ENCODE measurements at regions of chr1 and their contacts with region 1.

Region 1: GRCh38 chr1:203440771-203441170 is 34.8 kb upstream of the PRELP start:
- DNase-seq: peak in 1 of 2 donors; percentile 92
- H3K4me3 ChIP-seq: no peak overlapping the region
- H3K27ac ChIP-seq: peak overlapping the region; percentile 73 to 79
- H3K4me1 ChIP-seq: peaks cover 0 to 16% of the 10 kb centered on the region in 2 donors
- H3K27me3 ChIP-seq: no peaks in the 10 kb centered on the region
- CTCF ChIP-seq: peak; percentile 79 to 86 (median 82)

Region 2: GRCh38 chr1:203368624-203369451 is 71.9 kb before region 1 on chr1:
- intact Hi-C with region 1: loop called (anchors 1 kb)
- DNase-seq: peak in 1 of 2 donors; percentile 85
- H3K4me3 ChIP-seq: no peak overlapping the region
- H3K27ac ChIP-seq: no peak overlapping the region
- H3K4me1 ChIP-seq: peaks cover 0 to 11% of the 10 kb centered on the region in 2 donors
- H3K27me3 ChIP-seq: no peaks in the 10 kb centered on the region
- CTCF ChIP-seq: peak; percentile 38 to 50 (median 48)

Region 3: DNA sequence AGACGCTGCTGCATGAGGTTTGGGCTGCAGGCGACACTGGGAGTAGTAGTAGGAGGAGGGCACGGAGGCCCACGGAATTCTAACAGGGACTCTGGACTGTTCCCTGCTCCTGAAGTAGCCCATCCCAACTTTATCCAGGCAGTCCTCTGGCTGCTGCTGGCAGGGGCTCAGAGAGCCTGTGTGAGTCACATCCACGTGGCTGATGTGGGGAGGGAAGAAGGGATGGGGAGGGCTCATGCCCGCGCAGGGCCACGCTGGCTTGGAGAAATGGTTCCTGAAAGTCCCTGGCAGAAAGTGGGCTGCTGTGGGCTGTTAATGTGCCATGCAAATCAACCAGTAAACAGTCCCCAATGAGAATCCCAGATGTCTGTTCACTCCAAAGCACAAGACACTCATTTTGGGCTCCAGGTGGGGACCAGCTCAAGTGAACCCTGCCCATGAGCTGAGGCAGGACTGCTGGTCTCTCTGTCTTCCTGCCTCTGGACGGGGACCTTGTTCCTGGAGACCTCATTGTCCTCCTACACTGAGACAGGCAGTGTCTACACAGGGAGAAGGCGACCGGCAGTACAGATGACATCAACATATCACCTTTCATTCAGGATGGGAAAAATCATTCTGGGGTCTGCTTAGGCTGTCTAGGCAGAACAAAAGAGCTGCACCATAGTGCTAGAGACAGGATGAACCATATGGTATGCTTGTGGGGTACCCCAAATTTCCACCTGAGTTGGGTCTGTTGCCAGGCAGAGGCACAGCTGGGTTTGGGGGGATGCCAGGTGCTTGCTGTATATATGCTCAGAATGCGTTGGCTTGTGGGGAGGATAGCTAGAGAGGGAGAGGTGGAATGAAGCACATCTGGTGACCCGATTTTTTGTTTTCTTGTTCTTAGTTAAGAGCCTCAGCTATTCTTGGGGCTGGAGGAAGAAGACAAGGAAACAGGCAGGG is 32.0 kb before region 1 on chr1:
- intact Hi-C with region 1: loop called (anchors 5 kb)
- DNase-seq: peak; percentile 78 to 94
- H3K4me3 ChIP-seq: no peak overlapping the region
- H3K27ac ChIP-seq: peak overlapping the region; percentile 92 to 97
- H3K4me1 ChIP-seq: peaks cover 37 to 56% of the 10 kb centered on the region in 2 donors
- H3K27me3 ChIP-seq: no peaks in the 10 kb centered on the region
- CTCF ChIP-seq: no peak

Region 4: DNA sequence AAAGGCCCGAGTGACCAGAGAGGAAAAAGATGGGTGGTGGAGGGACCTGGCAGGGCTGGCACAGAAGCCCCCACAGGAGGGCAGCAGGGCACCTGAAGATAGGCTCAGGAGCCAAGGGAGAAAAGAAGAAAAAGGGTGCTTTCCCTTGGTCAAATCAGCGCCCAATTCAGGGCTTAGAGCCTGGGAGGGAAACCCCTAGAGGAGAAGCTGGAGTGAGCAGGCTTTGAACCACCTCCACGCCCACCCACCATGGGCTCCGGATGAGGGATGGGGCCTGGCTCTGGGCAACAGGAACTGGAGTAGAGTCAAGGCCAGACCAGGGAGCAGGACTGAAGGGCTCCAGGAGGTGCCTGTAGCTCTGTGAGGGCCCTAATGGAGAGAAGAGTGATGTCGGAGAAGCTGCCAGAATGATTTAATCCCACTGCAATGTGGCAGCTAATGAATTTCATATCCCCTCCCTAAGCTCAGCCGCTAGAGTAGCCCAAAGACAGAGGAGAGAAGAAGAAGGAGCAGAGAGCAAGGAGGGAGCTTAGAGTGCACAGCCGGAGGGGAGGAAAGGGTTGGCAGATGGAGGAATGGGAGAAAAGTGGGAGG is 22.8 kb after region 1 on chr1:
- intact Hi-C with region 1: no loop called
- DNase-seq: peak in 1 of 2 donors; percentile 79
- H3K4me3 ChIP-seq: peak overlapping the region in 1 of 2 donors; percentile 28
- H3K27ac ChIP-seq: peak overlapping the region; percentile 90 to 91
- H3K4me1 ChIP-seq: peaks cover 43 to 62% of the 10 kb centered on the region in 2 donors
- H3K27me3 ChIP-seq: no peaks in the 10 kb centered on the region
- CTCF ChIP-seq: peak in 1 of 3 experiments; percentile 24

Region 5: GRCh38 chr1:203486618-203487370 is 46.0 kb after region 1 on chr1:
- intact Hi-C with region 1: loop called (anchors 1 kb)
- DNase-seq: no peak
- H3K4me3 ChIP-seq: peak overlapping the region; percentile 29 to 52
- H3K27ac ChIP-seq: peak overlapping the region; percentile 77 to 86
- H3K4me1 ChIP-seq: peaks cover 24 to 54% of the 10 kb centered on the region in 2 donors
- H3K27me3 ChIP-seq: no peaks in the 10 kb centered on the region
- CTCF ChIP-seq: no peak

Region 6: DNA sequence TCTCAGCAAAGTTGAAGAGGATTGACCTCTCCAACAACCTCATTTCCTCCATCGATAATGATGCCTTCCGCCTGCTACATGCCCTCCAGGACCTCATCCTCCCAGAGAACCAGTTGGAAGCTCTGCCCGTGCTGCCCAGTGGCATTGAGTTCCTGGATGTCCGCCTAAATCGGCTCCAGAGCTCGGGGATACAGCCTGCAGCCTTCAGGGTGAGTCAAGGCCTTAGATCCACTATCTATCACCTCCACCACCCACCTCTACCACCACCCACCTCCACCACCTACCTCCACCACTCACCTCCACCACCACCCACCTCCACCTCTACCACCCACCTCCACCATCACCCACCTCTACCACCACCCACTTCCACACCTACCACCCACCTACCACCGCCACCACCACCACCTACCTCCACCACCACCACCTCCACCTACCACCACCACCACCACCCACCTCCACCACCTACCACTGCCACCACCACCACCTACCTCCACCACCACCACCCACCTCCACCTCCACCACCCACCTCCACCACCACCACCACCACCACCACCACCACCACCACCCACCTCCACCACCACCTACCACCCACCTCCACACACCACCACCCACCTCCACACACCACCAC is 59.0 kb after region 1 on chr1:
- intact Hi-C with region 1: no loop called
- DNase-seq: no peak
- H3K4me3 ChIP-seq: no peak overlapping the region
- H3K27ac ChIP-seq: no peak overlapping the region
- H3K4me1 ChIP-seq: peaks cover 0 to under 1% of the 10 kb centered on the region in 2 donors
- H3K27me3 ChIP-seq: no peaks in the 10 kb centered on the region
- CTCF ChIP-seq: no peak